ENCODE measurements at regions of chr16 and their contacts with region 1.

Region 1: GRCh38 chr16:81366316-81366932 is 51.7 kb downstream of the GAN start:
- DNase-seq: no peak
- ATAC-seq: peak in 7 of 8 donors; percentile 44 to 68 (median 65)
- H3K4me3 ChIP-seq: no peak overlapping the region
- H3K27ac ChIP-seq: peak overlapping the region in 1 of 10 donors; percentile 87
- H3K4me1 ChIP-seq: peaks cover 0 to 40% (median 12%) of the 10 kb centered on the region in 9 donors
- H3K27me3 ChIP-seq: no peaks in the 10 kb centered on the region
- CTCF ChIP-seq: peak; percentile 43 to 82 (median 70)

Region 2: GRCh38 chr16:81723098-81723723 is 356.8 kb after region 1 on chr16:
- intact Hi-C with region 1: loop called in 9 of 10 experiments (anchors 1 to 10 kb)
- DNase-seq: peak in 1 of 2 donors; percentile 75
- ATAC-seq: peak; percentile 88 to 95 (median 94)
- H3K4me3 ChIP-seq: no peak overlapping the region
- H3K27ac ChIP-seq: no peak overlapping the region
- H3K4me1 ChIP-seq: peaks cover 0 to 9% (median 0%) of the 10 kb centered on the region in 9 donors
- H3K27me3 ChIP-seq: peaks cover 0 to 6% (median 0%) of the 10 kb centered on the region in 7 donors
- CTCF ChIP-seq: peak; percentile 61 to 84 (median 76)

Region 3: DNA sequence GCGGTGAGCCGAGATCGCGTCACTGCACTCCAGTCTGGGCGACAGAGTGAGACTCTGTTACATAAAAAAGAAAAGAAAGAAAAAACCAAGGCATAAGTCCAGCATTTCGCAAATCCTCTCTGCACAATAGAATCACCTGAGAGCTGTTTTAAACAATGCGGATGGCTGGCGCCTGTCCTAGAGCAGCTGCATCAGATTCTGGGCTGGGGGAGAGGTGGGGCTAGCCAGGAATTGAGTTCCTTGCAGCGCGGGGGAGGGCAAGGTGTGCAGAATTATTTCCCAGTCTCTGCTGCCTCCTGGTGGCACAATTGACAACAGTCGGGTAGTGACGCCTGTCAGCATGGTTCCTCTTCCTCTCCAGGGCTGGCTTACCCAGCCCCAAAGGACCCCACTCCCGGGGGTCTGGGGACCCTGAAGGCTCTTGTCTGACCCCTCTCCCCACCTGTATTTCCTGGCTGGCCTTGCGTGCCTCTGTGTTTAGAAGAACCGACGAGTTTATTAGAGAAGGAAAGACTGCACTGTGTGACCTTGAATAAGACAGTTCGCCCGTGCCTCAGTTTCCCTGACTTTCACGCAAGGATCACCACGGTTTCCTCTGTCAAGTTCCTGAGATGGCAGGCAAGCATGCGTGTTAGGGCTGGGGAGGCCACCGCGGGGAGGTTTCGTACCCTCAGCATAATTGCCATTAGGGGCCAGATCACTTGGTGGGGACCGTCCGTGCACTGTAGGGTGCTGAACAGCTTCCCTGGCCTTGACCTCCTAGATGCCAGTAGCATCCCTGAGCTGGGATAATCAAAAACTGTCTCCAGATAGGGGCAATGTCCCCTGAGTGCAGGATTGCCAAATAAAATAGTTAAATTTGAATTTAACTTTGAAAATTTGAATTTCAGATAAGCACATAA is 371.7 kb after region 1 on chr16:
- intact Hi-C with region 1: loop called in 2 of 10 experiments (anchors 5 kb)
- DNase-seq: peak; percentile 68 to 89
- ATAC-seq: peak; percentile 87 to 97 (median 94)
- H3K4me3 ChIP-seq: peak overlapping the region in 7 of 10 donors; percentile 12 to 43 (median 32)
- H3K27ac ChIP-seq: peak overlapping the region in 5 of 10 donors; percentile 25 to 79 (median 61)
- H3K4me1 ChIP-seq: peaks cover 0 to 24% (median 9%) of the 10 kb centered on the region in 9 donors
- H3K27me3 ChIP-seq: peaks cover 0 to 9% (median 0%) of the 10 kb centered on the region in 7 donors
- CTCF ChIP-seq: peak; percentile 61 to 91 (median 85)

Region 4: GRCh38 chr16:81885976-81886586 is 519.7 kb after region 1 on chr16:
- intact Hi-C with region 1: loop called in 2 of 10 experiments (anchors 10 kb)
- DNase-seq: no peak
- ATAC-seq: peak in 3 of 8 donors; percentile 25 to 64 (median 48)
- H3K4me3 ChIP-seq: no peak overlapping the region
- H3K27ac ChIP-seq: no peak overlapping the region
- H3K4me1 ChIP-seq: no peaks in the 10 kb centered on the region
- H3K27me3 ChIP-seq: peaks cover 0 to 3% (median 0%) of the 10 kb centered on the region in 7 donors
- CTCF ChIP-seq: peak in 8 of 9 donors; percentile 20 to 74 (median 59)